ENCODE measurements at regions of chr1 and their contacts with region 1.

Region 1: GRCh38 chr1:16366722-16367257 is at the start of gene SZRD1:
- DNase-seq: peak; percentile 99
- H3K4me3 ChIP-seq: peak within 1 kb of the TSS; percentile 64 to 92 (median 85)
- H3K27ac ChIP-seq: peak within 1 kb of the TSS; percentile 92 to 98 (median 94)
- H3K4me1 ChIP-seq: peaks cover 0 to 46% (median 39%) of the 10 kb centered on the region in 4 donors
- H3K27me3 ChIP-seq: no peaks in the 10 kb centered on the region
- CTCF ChIP-seq: no peak
- EP300 ChIP-seq: no peak
- POLR2A ChIP-seq: no peak
- total RNA-seq, gene SZRD1: 65.0 to 77.3 (median 68.1) TPM

Region 2: GRCh38 chr1:16206547-16207317 is 160.1 kb before region 1 on chr1:
- intact Hi-C with region 1: loop called (anchors 10 kb)
- DNase-seq: peak; percentile 99
- H3K4me3 ChIP-seq: peak overlapping the region; percentile 37 to 60 (median 46)
- H3K27ac ChIP-seq: peak overlapping the region; percentile 85 to 97 (median 90)
- H3K4me1 ChIP-seq: peaks cover 0 to 20% (median 16%) of the 10 kb centered on the region in 4 donors
- H3K27me3 ChIP-seq: no peaks in the 10 kb centered on the region
- CTCF ChIP-seq: no peak
- EP300 ChIP-seq: no peak
- POLR2A ChIP-seq: peak in 1 of 2 donors; percentile 56

Region 3: GRCh38 chr1:16324456-16324890 is 42.3 kb before region 1 on chr1:
- intact Hi-C with region 1: loop called (anchors 5 kb)
- DNase-seq: no peak
- H3K4me3 ChIP-seq: no peak overlapping the region
- H3K27ac ChIP-seq: peak overlapping the region; percentile 1 to 56 (median 33)
- H3K4me1 ChIP-seq: peaks cover 0 to 41% (median 26%) of the 10 kb centered on the region in 4 donors
- H3K27me3 ChIP-seq: no peaks in the 10 kb centered on the region
- CTCF ChIP-seq: no peak
- EP300 ChIP-seq: no peak
- POLR2A ChIP-seq: no peak

Region 4: GRCh38 chr1:16386454-16387113 is 19.8 kb after region 1 on chr1:
- intact Hi-C with region 1: no loop called
- DNase-seq: peak; percentile 71
- H3K4me3 ChIP-seq: peak overlapping the region in 2 of 4 donors; percentile 39 to 44
- H3K27ac ChIP-seq: peak overlapping the region; percentile 73 to 86 (median 76)
- H3K4me1 ChIP-seq: peaks cover 0 to 67% (median 59%) of the 10 kb centered on the region in 4 donors
- H3K27me3 ChIP-seq: no peaks in the 10 kb centered on the region
- CTCF ChIP-seq: no peak
- EP300 ChIP-seq: no peak
- POLR2A ChIP-seq: no peak

Region 5: DNA sequence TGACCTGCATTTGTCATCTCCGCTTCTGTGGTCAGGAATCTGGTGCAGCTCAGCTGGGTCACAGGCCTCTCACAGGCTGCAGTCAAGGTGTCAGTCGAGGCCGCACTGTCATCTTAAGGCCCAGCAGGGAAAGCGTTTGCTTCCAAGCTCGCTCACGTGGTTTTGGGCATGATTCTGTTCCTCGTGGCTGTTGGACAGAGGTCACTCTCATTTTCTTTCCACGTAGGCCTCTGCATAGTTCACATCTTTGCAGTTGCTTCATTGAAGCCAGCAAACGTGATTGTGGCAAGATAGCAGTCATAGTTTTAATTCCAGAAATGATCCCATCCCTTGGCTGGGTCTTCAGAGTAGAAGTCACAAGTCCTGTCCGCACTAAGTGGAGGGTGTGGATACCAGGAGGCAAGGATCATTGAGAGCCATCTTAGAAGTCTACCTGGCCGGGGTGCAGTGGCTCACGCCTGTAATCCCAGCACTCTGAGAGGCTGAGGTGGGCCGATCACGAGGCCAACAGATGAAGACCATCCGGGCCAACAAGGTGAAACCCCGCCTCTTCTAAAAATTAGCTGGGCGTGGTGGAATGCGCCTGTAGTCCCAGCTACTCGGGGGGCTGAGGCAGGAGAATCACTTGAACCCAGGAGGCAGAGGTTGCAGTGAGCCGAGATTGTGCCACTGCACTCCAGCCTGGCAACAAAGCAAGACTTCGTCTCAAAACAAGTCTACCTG is 98.3 kb after region 1 on chr1:
- intact Hi-C with region 1: no loop called
- DNase-seq: no peak
- H3K4me3 ChIP-seq: no peak overlapping the region
- H3K27ac ChIP-seq: no peak overlapping the region
- H3K4me1 ChIP-seq: no peaks in the 10 kb centered on the region
- H3K27me3 ChIP-seq: no peaks in the 10 kb centered on the region
- CTCF ChIP-seq: no peak
- EP300 ChIP-seq: no peak
- POLR2A ChIP-seq: no peak

Measured in sigmoid colon (tissue), 7 donors.